ENCODE measurements at regions of chr14 and their contacts with region 1.

Region 1: DNA sequence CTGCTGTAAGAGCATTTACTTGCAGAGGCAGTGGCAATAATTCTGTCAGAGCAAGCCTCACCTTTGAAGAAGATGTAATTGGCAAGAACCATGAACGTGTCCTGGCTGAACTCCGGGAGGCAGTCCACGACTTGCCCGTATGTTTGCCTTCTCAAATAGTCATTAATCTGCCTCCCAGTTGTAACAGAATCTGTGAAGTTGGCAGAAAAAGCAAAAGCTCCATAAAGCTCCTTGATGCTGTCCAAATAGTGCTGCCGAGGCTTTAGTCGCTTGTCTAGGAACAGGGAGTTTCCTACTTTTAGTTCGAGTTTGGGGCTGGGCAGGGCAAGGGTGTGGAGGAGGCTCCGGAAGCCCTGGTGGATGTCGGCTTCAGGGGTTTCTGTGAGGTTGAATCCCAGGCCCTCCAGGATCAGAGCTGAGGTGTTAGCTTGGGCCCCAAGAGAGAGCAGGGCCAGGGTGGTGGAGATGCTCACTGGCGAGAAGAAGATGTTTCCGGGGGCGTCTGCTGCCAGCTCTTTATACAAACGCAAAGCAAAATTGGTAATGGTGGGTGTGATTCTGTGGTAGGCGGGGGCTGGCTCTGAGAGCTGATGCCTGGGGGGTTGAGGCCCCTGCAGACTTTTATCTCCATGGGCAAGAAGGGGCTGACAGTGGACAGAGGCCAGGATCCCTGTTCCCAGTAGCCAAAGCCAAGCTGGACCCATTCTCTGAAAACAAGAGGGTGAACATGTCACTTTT is 4.4 kb downstream of the SERPINA11 start:
- DNase-seq: peak in 1 of 2 donors; percentile 32
- H3K4me3 ChIP-seq: no peak overlapping the region
- CTCF ChIP-seq: no peak
- POLR2A ChIP-seq: no peak

Region 2: DNA sequence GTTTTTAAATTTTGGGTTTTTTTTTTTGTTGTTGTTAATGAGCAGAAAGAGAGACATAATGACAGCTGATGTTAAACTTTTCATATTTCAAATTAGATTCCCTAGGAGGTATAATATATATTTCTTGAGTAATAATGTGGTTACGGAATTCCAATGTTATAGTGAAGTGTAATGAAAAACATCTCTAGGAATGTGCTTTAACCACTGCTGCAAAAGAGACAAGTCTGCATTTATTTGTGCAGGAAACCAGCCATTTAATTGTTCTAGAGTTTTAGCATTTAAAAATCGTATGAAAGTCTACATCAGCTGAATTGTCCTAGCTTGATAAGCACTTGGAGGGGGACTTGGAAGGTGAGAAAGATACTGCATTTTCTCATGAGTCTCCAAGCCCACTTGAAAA is 169.5 kb before region 1 on chr14:
- intact Hi-C with region 1: no loop called
- DNase-seq: no peak
- H3K4me3 ChIP-seq: no peak overlapping the region
- CTCF ChIP-seq: no peak
- POLR2A ChIP-seq: no peak

Region 3: GRCh38 chr14:94548999-94549985 is 101.1 kb after region 1 on chr14:
- intact Hi-C with region 1: loop called (anchors 10 kb)
- DNase-seq: peak; percentile 38 to 91
- H3K4me3 ChIP-seq: no peak overlapping the region
- CTCF ChIP-seq: peak in 1 of 3 donors; percentile 52
- POLR2A ChIP-seq: no peak